Transverse colon (tissue), 4 donors: ENCODE measurements at regions of chr18 and their contacts with region 1.

Region 1: DNA sequence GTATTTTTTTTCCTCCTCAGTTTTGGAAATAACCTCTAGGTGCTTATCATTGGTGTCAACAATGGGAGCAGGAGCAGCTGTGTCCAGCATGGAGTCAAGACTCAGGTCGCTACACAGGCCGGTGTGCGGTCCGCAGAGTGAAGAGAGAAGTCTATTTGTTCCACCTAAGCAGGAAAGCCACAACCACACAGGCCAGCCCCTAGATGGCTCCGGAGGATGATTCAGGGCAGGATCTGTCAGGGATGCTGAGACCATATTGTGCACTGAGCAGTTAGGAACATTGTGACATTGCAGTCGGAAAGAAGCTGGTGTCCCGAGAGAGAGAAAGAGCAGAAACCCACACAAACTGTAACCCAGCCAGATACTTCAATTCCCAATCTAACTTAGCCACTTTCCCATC is 136.9 kb downstream of the GAREM1 start:
- DNase-seq: no peak
- H3K4me3 ChIP-seq: no peak overlapping the region
- H3K27ac ChIP-seq: no peak overlapping the region
- H3K4me1 ChIP-seq: peaks cover 0 to 1% (median 0%) of the 10 kb centered on the region in 4 donors
- H3K27me3 ChIP-seq: no peaks in the 10 kb centered on the region
- CTCF ChIP-seq: no peak
- EP300 ChIP-seq: no peak
- POLR2A ChIP-seq: no peak

Region 2: DNA sequence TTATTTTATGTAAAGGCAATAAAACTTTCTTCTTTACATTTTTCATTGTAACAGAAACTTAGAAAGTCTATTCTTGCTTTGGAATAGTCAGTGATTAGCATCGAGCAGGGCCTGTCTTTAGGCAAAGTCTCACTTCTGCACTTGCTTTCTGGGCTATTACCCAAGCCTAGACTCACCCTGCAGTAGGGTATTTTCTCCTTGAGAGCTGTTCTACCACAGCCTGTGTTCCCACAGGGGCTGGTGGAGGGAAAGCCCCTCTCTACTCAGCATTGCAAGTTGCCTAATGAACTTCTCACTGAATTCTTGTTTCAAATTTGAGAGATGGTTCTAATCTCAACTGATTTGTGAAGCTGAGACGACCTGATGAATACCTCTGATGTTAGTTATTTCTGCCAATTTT is 550.8 kb after region 1 on chr18:
- in situ Hi-C with region 1: no loop called
- intact Hi-C with region 1: no loop called
- DNase-seq: no peak
- H3K4me3 ChIP-seq: no peak overlapping the region
- H3K27ac ChIP-seq: no peak overlapping the region
- H3K4me1 ChIP-seq: no peaks in the 10 kb centered on the region
- H3K27me3 ChIP-seq: no peaks in the 10 kb centered on the region
- CTCF ChIP-seq: no peak
- EP300 ChIP-seq: no peak
- POLR2A ChIP-seq: no peak

Region 3: GRCh38 chr18:33350256-33350655 is 1016.5 kb after region 1 on chr18:
- in situ Hi-C with region 1: no loop called
- intact Hi-C with region 1: no loop called
- DNase-seq: no peak
- H3K4me3 ChIP-seq: no peak overlapping the region
- H3K27ac ChIP-seq: no peak overlapping the region
- H3K4me1 ChIP-seq: no peaks in the 10 kb centered on the region
- H3K27me3 ChIP-seq: no peaks in the 10 kb centered on the region
- CTCF ChIP-seq: no peak
- EP300 ChIP-seq: no peak
- POLR2A ChIP-seq: no peak

Region 4: GRCh38 chr18:33540392-33540791 is 1206.6 kb after region 1 on chr18:
- in situ Hi-C with region 1: no loop called
- intact Hi-C with region 1: loop called (anchors 5 kb)
- DNase-seq: no peak
- H3K4me3 ChIP-seq: no peak overlapping the region
- H3K27ac ChIP-seq: no peak overlapping the region
- H3K4me1 ChIP-seq: peaks cover 0 to 5% (median 0%) of the 10 kb centered on the region in 4 donors
- H3K27me3 ChIP-seq: no peaks in the 10 kb centered on the region
- CTCF ChIP-seq: no peak
- EP300 ChIP-seq: no peak
- POLR2A ChIP-seq: no peak